ENCODE measurements at regions of chr6 and their contacts with region 1.

Region 1: DNA sequence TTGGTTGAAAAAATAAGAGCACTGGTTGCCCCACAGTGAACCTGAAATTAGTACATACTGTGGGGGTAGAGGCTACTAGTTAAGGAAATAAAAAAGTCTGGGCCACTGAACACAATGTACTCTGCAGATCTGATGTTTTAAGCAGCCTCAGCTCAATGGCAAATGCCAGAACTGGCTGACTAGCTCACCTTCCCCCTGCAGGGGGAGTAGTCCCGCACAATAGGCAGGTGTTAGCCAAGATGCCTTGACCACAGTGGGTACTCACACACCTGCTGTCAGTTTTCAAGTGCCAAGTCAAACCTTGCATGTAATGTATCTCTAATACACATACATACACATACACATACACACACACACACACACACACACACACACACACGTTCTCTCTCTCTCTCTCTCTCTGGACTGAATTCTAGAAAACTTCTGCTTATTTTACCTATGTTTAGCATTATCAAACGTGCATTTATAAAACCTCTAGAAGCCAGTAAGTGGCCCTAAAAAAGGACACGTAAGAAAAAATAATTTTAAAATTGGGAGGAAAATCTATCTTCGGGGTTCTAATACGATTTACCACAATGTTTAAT is 36.1 kb downstream of the GMDS start:
- DNase-seq: no peak
- H3K4me3 ChIP-seq: no peak overlapping the region
- H3K27me3 ChIP-seq: no peaks in the 10 kb centered on the region
- CTCF ChIP-seq: peak; percentile 67

Region 2: DNA sequence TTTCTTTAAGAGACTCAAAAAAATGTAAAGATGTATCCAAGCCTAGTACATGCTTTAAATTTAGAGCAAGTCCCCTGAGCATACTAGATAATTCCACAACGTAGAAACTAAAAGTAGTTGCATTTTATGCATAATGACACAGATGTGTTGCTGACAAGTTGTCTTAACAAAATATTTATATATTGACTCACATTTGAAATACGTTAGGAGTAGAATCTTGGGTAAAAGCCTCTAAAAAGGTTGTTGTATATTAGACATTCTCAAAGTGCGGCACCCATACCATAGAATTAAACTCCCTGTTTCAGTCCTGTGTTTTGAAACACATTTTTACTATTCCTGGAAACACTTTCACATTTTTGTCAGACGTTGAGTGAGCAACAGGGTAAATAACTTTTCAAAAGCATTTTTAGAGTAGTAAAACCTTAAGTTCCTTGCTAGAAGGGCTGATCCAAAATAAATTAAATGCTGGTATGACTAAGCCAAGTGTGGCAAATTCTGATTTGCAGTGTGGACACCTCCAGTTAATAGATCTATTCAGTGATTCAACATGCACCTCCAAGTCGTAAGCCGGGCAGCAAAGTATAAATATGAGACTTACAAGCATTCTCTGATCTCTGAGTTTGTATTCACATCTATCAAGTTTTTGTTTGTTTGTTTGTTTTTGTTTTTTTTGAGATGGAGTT is 61.4 kb before region 1 on chr6:
- CTCF ChIA-PET with region 1: no interaction called
- POLR2A ChIA-PET with region 1: no interaction called
- DNase-seq: peak; percentile 16
- H3K4me3 ChIP-seq: no peak overlapping the region
- H3K27me3 ChIP-seq: no peaks in the 10 kb centered on the region
- CTCF ChIP-seq: no peak

Region 3: DNA sequence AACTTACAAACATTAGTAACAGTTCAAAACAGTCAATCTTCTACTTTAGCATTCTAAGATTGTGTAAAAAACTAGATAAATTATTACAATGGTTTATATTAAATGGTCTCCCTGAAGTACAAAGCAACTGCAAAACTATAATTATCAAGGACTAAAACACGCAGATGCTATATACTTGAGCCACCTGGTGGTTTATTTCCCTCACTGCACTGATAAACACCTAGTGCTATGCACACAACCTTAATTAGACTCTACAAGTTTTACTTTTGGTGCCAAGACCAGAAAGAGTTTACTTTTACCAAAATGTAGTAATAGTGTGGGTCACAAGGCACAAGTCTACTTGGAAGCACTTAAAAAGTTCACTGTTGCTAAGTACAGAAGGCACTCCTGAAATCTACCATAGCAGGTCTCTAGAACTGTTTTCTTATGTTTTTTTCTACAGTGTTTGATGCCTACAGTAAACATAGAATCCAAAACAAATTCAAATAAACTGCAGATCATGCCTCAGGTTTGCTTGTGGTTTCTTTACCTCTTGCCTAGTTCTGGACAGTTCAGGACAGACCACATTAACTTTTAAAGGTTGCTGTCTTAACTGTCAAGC is 13.1 kb before region 1 on chr6:
- CTCF ChIA-PET with region 1: interaction called, 11 read pairs
- POLR2A ChIA-PET with region 1: no interaction called
- DNase-seq: no peak
- H3K4me3 ChIP-seq: no peak overlapping the region
- H3K27me3 ChIP-seq: no peaks in the 10 kb centered on the region
- CTCF ChIP-seq: peak; percentile 70

Region 4: DNA sequence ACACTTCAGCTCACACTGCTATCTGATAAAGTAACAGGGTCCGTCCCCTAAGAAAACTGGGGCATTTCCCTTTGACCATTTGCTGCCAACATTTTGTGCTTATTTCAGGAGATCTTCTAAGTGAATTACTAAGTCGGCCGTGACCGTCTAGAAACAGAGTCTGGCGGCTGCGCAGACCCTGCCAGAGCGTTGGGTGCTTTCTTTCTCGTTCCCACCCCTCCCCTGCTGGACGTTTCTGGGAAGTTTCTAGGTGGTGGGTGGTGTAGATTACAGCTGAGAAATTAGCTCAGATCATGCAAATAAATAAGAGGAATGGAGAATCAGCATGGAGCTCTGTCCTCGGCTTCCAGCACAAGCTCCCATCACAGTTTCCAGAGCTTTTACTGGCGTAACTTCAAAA is 413.4 kb after region 1 on chr6:
- CTCF ChIA-PET with region 1: no interaction called
- POLR2A ChIA-PET with region 1: no interaction called
- DNase-seq: no peak
- H3K4me3 ChIP-seq: no peak overlapping the region
- H3K27me3 ChIP-seq: peaks cover 5% of the 10 kb centered on the region; the same call in 1 of the 2 replicates
- CTCF ChIP-seq: no peak

Measured in BJ (cell line).